Activated CD8-positive, alpha-beta T cell treated with anti-CD3 and anti-CD28 coated beads, Interleukin-2, amount 10 ng/mL, durations not matched to agents 7 days and 5 days (primary cell): ENCODE measurements at regions of chr17 and their contacts with region 1.

Region 1: GRCh38 chr17:79393358-79394202 is 217.3 kb downstream of the RBFOX3 start:
- DNase-seq: peak; percentile 71
- ATAC-seq: peak; percentile 68
- H3K4me3 Mint-ChIP-seq: no peak overlapping the region
- H3K27ac Mint-ChIP-seq: no peak overlapping the region
- H3K4me1 Mint-ChIP-seq: no peaks in the 10 kb centered on the region
- H3K27me3 Mint-ChIP-seq: peaks cover 10% of the 10 kb centered on the region

Region 2: GRCh38 chr17:79065105-79065670 is 328.4 kb before region 1 on chr17:
- CTCF ChIA-PET with region 1: interaction called, 14 read pairs
- POLR2A ChIA-PET with region 1: interaction called, 3 read pairs
- DNase-seq: peak; percentile 66
- ATAC-seq: peak; percentile 68
- H3K4me3 Mint-ChIP-seq: no peak overlapping the region
- H3K27ac Mint-ChIP-seq: no peak overlapping the region
- H3K4me1 Mint-ChIP-seq: peaks cover 5% of the 10 kb centered on the region
- H3K27me3 Mint-ChIP-seq: peaks cover 3% of the 10 kb centered on the region

Region 3: GRCh38 chr17:79087428-79088143 is 306.0 kb before region 1 on chr17:
- CTCF ChIA-PET with region 1: interaction called, 70 read pairs
- POLR2A ChIA-PET with region 1: no interaction called
- DNase-seq: peak; percentile 79
- ATAC-seq: peak; percentile 77
- H3K4me3 Mint-ChIP-seq: no peak overlapping the region
- H3K27ac Mint-ChIP-seq: no peak overlapping the region
- H3K4me1 Mint-ChIP-seq: peaks cover 4% of the 10 kb centered on the region
- H3K27me3 Mint-ChIP-seq: no peaks in the 10 kb centered on the region

Region 4: GRCh38 chr17:79093270-79093669 is 300.3 kb before region 1 on chr17:
- CTCF ChIA-PET with region 1: interaction called, 70 read pairs
- POLR2A ChIA-PET with region 1: no interaction called
- DNase-seq: no peak
- ATAC-seq: no peak
- H3K4me3 Mint-ChIP-seq: no peak overlapping the region
- H3K27ac Mint-ChIP-seq: no peak overlapping the region
- H3K4me1 Mint-ChIP-seq: peaks cover 11% of the 10 kb centered on the region
- H3K27me3 Mint-ChIP-seq: peaks cover 12% of the 10 kb centered on the region

Region 5: GRCh38 chr17:79338604-79339003 is 55.0 kb before region 1 on chr17:
- CTCF ChIA-PET with region 1: no interaction called
- POLR2A ChIA-PET with region 1: no interaction called
- DNase-seq: no peak
- ATAC-seq: no peak
- H3K4me3 Mint-ChIP-seq: no peak overlapping the region
- H3K27ac Mint-ChIP-seq: no peak overlapping the region
- H3K4me1 Mint-ChIP-seq: no peaks in the 10 kb centered on the region
- H3K27me3 Mint-ChIP-seq: no peaks in the 10 kb centered on the region